Activated CD4-positive, alpha-beta T cell treated with anti-CD3 and anti-CD28 coated beads for 36 hours (primary cell): ENCODE measurements at regions of chr6 and their contacts with region 1.

Region 1: DNA sequence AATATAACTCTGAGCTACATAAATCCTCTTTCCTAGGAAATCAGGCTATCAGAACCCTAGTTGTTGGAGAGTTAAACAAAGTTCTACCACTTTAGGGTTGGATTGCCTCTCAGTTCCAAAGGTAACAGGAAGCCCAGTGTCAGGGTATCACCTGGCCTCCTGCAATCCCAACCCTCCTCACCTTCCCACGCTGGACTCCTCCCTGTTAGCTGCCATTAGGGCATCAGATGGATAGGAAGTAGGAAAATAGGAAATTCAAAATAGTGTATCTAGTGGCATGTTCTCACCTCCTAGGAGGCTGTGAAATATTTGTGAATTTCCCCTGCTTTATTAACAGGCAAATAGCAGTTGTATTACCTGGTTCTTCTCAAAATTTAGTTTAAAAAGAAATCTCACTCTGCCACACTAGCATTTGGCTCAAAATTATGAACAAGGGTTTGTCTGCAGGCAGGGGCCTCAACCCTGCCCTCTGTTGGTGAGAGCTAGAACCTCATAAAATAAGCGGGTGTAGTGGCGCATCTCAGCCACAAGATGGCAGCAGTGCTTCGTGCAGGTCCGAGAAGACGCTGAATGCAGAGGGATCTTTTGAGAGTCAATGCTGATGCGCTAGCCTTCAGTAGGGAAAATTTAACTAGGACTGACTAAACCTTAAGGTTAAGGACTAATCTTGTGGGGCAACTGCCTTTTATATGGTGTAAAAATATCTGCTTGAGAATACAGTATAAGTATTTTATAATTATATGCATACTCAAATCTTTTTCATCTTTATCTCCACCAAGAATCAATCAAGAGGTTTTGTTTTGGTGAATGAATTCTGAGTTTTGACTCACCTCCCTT is 209.8 kb upstream of the KCNQ5 start:
- DNase-seq: peak; percentile 80
- ATAC-seq: peak; percentile 90
- H3K4me3 Mint-ChIP-seq: no peak overlapping the region
- H3K27ac Mint-ChIP-seq: no peak overlapping the region
- H3K4me1 Mint-ChIP-seq: no peaks in the 10 kb centered on the region
- H3K27me3 Mint-ChIP-seq: peaks cover 5% of the 10 kb centered on the region

Region 2: GRCh38 chr6:72401865-72402264 is 10.2 kb before region 1 on chr6:
- CTCF ChIA-PET with region 1: interaction called, 13 read pairs
- POLR2A ChIA-PET with region 1: no interaction called
- intact Hi-C with region 1: no loop called
- DNase-seq: no peak
- ATAC-seq: no peak
- H3K4me3 Mint-ChIP-seq: no peak overlapping the region
- H3K27ac Mint-ChIP-seq: no peak overlapping the region
- H3K4me1 Mint-ChIP-seq: no peaks in the 10 kb centered on the region
- H3K27me3 Mint-ChIP-seq: no peaks in the 10 kb centered on the region

Region 3: GRCh38 chr6:72422171-72422570 is 10.1 kb after region 1 on chr6:
- CTCF ChIA-PET with region 1: interaction called, 41 read pairs
- POLR2A ChIA-PET with region 1: no interaction called
- intact Hi-C with region 1: no loop called
- DNase-seq: no peak
- ATAC-seq: no peak
- H3K4me3 Mint-ChIP-seq: no peak overlapping the region
- H3K27ac Mint-ChIP-seq: no peak overlapping the region
- H3K4me1 Mint-ChIP-seq: no peaks in the 10 kb centered on the region
- H3K27me3 Mint-ChIP-seq: peaks cover 2% of the 10 kb centered on the region

Region 4: GRCh38 chr6:72580281-72580940 is 168.3 kb after region 1 on chr6:
- CTCF ChIA-PET with region 1: interaction called, 4 read pairs
- POLR2A ChIA-PET with region 1: no interaction called
- intact Hi-C with region 1: loop called in 1 of 2 experiments (anchors 5 kb)
- DNase-seq: peak; percentile 10
- ATAC-seq: no peak
- H3K4me3 Mint-ChIP-seq: no peak overlapping the region
- H3K27ac Mint-ChIP-seq: no peak overlapping the region
- H3K4me1 Mint-ChIP-seq: no peaks in the 10 kb centered on the region
- H3K27me3 Mint-ChIP-seq: peaks cover 2% of the 10 kb centered on the region

Region 5: DNA sequence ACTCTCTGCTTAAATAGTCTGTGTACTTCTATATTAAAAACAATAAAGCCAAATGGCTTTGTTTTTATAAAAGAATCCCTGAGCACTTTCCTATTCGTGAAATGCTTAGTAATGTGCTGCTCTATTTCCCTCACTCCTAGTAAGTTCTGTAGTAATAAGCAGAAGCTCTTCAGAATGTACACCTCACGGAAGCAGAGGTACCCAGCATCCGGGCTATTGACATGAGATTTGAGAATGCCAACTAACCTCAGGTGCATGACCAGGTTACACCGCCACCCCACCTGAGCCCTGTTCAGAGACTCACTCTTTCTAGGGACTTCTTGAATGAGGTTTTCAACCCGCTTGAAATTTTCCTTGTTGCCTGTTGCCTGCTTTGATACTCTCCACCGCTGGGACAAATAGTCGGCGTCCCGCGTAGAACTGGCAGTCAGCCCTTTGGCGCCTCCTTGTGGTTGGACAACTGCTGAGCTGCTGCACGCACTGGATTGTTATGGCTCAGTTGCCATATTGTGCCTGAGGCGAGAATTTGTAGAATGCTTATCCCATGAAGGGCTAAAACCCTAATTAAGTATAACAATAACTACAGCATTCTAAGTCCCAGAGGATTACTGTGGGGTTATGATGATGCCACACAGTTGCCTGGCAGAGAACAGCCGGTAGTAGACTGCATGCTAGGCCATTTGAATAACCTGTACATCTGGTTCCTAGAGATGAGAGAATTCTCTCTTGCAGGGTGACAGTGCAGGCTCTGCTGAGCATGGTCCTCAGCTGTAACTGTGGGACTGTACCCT is 717.8 kb after region 1 on chr6:
- CTCF ChIA-PET with region 1: interaction called, 25 read pairs
- POLR2A ChIA-PET with region 1: interaction called, 3 read pairs
- intact Hi-C with region 1: loop called (anchors 1 kb)
- DNase-seq: peak; percentile 91
- ATAC-seq: peak; percentile 98
- H3K4me3 Mint-ChIP-seq: no peak overlapping the region
- H3K27ac Mint-ChIP-seq: no peak overlapping the region
- H3K4me1 Mint-ChIP-seq: peaks cover 4% of the 10 kb centered on the region
- H3K27me3 Mint-ChIP-seq: peaks cover 10% of the 10 kb centered on the region

Region 6: DNA sequence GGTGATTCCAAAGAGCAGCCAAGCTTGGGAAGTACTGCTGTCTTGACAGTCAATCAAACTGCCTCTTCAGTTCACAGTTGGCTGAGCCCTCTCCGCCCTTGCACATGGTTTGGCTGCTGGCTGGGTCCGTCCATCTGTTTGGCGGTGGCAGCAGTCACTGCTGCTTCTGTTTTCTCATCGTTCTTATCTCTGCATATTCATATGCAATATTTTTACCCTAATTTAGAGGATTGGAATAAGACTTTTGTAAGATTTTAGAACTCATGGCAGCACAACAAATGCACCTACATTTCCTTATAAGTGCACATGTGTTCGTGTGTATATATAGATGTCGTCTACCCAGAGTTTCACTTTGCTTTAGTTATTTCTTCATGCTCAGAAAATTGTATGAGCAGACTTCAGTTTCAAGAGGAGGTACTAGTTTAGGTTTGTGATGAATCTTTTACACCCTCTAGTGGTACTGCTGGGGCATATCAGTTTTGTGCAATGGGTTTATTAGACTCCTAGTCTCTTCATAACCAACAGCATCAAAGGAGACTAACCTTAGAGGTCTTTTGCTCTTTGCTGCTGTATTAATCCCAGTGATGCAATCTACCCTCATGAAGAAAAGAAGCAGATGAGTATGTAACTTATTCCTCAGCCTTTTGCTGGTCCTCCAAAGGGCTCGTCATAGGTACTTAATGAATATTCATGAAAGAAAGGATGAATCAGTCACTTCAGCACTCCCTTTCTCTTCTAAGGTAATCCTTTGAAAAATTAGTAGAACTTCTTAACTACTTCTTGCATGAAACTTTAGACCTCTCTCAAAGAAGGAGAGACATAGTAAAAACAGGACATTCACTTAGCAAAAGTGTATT is 768.9 kb after region 1 on chr6:
- CTCF ChIA-PET with region 1: interaction called, 8 read pairs
- POLR2A ChIA-PET with region 1: no interaction called
- intact Hi-C with region 1: loop called (anchors 1 to 2 kb)
- DNase-seq: no peak
- ATAC-seq: peak; percentile 90
- H3K4me3 Mint-ChIP-seq: no peak overlapping the region
- H3K27ac Mint-ChIP-seq: no peak overlapping the region
- H3K4me1 Mint-ChIP-seq: no peaks in the 10 kb centered on the region
- H3K27me3 Mint-ChIP-seq: no peaks in the 10 kb centered on the region